Transverse colon (tissue), 4 donors: ENCODE measurements at regions of chr12 and their contacts with region 1.

Region 1: DNA sequence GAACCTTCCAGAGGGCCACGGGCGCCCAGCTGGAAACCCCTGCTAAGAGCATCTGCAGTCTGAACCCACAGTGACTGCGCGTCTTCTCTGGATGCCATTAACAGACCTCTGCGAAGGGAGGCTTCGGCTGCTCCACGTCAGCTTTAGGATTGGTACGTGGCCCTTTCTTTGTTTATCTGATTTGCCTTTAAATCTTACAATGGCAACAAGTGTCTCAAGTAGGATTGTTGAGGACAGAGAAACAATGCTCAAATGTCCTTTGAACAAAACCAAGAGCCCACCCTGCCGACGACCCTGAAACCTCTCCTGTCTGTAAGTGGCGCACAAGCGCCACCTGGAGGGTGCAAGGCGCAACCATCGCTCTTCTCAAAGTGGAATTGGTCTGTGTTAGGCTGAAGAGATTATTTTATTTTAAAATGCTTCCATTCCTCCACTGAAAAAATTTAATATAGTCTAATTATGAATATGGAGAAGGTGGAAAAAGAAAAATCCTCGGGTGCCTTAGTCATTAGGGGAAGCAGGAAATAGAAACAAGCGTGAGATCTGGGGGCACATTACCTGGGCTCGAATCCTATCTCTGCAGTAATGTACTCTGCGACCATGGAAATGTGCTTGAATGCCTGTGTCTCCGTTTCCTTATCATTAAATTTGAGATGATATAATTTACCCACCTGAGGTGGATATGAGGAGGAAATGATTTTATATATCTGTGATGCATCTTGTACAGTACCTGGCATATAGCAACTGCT is 82.6 kb upstream of the PTPRB start:
- DNase-seq: no peak
- H3K4me3 ChIP-seq: peak overlapping the region in 1 of 4 donors; percentile 25
- H3K27ac ChIP-seq: no peak overlapping the region
- H3K4me1 ChIP-seq: peaks cover 0 to 7% (median 0%) of the 10 kb centered on the region in 4 donors
- H3K27me3 ChIP-seq: no peaks in the 10 kb centered on the region
- CTCF ChIP-seq: peak; percentile 75 to 84 (median 77)
- EP300 ChIP-seq: no peak
- POLR2A ChIP-seq: no peak

Region 2: GRCh38 chr12:69879041-69879960 is 840.5 kb before region 1 on chr12:
- in situ Hi-C with region 1: loop called (anchors 5 to 25 kb)
- intact Hi-C with region 1: loop called (anchors 10 kb)
- DNase-seq: peak; percentile 75
- H3K4me3 ChIP-seq: peak overlapping the region in 2 of 4 donors; percentile 7 to 24
- H3K27ac ChIP-seq: no peak overlapping the region
- H3K4me1 ChIP-seq: peaks cover 0 to 7% (median 3%) of the 10 kb centered on the region in 4 donors
- H3K27me3 ChIP-seq: no peaks in the 10 kb centered on the region
- CTCF ChIP-seq: peak; percentile 83 to 91 (median 85)
- EP300 ChIP-seq: no peak
- POLR2A ChIP-seq: no peak

Region 3: DNA sequence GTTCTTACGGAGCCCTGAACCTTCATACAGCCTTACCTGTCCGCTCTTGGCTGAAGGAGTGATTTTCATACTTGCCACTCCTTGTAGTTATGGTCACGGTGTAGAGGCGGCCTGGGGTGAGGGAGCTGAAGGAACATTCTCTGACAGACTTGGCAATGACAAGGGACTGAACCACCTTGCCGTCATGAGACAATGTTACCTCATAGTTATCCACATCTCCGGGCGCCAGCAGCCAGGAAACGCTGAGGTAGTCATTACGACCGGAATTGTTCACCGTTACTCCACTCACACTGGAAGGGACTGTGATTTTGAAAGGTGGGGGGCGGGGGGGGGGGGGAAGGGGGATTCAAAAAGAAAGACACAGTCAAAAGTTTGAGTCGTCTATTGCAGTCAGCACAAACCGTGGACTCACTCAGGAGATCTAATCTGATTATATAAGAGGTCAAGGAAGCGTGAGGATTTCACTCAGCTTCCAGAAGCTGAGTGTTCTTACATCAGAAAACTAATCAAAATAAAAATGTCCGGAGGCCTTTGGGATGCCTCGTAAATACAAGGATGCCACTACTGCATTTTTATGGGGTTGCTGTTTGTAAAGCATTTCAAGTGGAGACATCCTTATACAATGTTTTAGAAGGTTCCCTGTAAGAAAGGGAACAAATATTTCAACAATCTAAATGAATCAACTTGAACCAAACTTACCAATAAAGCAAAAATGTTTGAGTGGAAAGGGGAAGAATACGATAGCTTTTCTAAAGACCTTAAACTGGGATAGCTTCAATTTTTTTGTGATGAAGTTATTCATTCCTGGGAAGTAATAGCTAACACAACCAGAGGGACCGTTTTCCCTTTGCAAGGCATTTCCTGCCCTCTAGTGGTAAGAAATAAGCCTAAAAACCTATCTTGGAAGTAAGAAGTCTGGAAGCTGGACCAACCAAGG is 143.2 kb before region 1 on chr12:
- in situ Hi-C with region 1: loop called in 1 of 4 experiments (anchors 10 kb)
- intact Hi-C with region 1: no loop called
- DNase-seq: no peak
- H3K4me3 ChIP-seq: no peak overlapping the region
- H3K27ac ChIP-seq: no peak overlapping the region
- H3K4me1 ChIP-seq: peaks cover 0 to 2% (median 0%) of the 10 kb centered on the region in 4 donors
- H3K27me3 ChIP-seq: no peaks in the 10 kb centered on the region
- CTCF ChIP-seq: peak; percentile 68 to 79 (median 76)
- EP300 ChIP-seq: no peak
- POLR2A ChIP-seq: no peak

Region 4: DNA sequence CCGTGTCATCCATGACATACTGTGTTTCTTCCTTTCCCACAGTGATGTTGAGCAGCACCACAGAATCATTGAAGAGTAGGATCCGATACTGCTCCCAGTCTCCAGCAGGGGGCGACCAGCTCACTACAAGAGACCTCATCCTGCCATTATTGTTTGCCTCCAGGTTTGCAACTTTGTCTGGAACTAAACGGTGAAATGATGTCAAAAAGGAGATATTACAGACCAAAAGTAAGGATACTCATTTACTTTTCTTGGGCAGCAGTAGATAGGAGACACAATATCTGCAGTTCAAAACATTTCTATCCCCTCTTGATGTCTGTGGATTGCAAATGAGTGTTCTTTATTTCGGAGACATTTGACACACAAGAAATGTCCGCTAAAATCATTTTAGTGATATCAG is 129.8 kb before region 1 on chr12:
- in situ Hi-C with region 1: loop called in 3 of 4 experiments (anchors 10 kb)
- intact Hi-C with region 1: no loop called
- DNase-seq: peak; percentile 69
- H3K4me3 ChIP-seq: no peak overlapping the region
- H3K27ac ChIP-seq: no peak overlapping the region
- H3K4me1 ChIP-seq: no peaks in the 10 kb centered on the region
- H3K27me3 ChIP-seq: no peaks in the 10 kb centered on the region
- CTCF ChIP-seq: peak; percentile 65 to 80 (median 74)
- EP300 ChIP-seq: no peak
- POLR2A ChIP-seq: no peak

Region 5: DNA sequence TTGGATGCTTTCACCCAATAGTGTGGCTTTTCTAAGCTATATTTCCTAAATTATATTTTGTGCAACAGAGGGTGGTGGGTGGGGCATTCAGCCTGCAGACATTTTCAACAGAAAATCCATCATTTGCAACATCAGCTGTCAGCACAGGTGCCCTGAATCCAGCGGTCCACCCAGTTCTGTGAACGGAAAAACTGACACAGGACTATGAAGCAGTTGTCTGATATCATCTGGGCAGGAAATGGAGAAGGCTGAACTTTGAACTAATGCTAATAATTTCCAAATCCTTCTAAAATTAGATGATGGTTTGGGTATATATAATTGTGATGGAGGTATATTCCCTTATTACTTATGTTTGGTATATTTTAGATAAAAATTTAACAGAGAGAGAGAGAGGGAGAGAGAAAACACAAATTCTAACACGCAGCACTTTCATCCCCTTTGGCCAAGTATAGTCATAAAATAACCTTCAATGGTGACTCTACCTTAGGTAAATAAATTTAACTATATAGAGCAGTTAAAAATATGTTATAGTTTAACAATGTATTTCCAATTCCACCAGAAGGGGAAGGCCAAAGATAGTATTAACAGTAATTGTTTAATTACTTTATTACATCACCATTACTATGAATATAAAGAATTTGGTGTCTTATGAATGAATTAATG is 24.4 kb before region 1 on chr12:
- in situ Hi-C with region 1: no loop called
- intact Hi-C with region 1: no loop called
- DNase-seq: no peak
- H3K4me3 ChIP-seq: no peak overlapping the region
- H3K27ac ChIP-seq: no peak overlapping the region
- H3K4me1 ChIP-seq: peaks cover 0 to 8% (median 0%) of the 10 kb centered on the region in 4 donors
- H3K27me3 ChIP-seq: no peaks in the 10 kb centered on the region
- CTCF ChIP-seq: no peak
- EP300 ChIP-seq: no peak
- POLR2A ChIP-seq: no peak

Region 6: DNA sequence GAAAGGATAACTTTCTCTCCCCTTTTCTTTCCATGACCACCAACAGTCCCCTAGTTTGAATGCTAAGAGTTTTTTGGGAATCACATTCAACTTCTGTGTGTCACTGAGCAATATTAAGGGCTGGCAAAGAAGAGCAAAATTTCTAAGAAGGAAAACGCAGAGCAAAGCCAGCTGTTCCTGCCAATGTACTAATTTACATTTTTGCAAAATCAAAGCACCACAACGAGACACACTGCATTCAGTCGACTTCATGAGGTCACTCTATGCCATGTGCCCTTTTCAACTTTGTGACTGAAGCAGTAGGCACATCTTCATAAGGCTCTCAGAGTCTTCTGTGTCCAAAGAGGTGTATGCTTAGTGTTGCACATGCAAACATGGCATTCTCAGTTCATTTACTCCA is 134.3 kb after region 1 on chr12:
- in situ Hi-C with region 1: no loop called
- intact Hi-C with region 1: no loop called
- DNase-seq: no peak
- H3K4me3 ChIP-seq: no peak overlapping the region
- H3K27ac ChIP-seq: peak overlapping the region in 3 of 4 donors; percentile 7 to 17 (median 17)
- H3K4me1 ChIP-seq: no peaks in the 10 kb centered on the region
- H3K27me3 ChIP-seq: no peaks in the 10 kb centered on the region
- CTCF ChIP-seq: no peak
- EP300 ChIP-seq: no peak
- POLR2A ChIP-seq: no peak

Region 7: GRCh38 chr12:71371122-71371521 is 651.3 kb after region 1 on chr12:
- in situ Hi-C with region 1: no loop called
- intact Hi-C with region 1: no loop called
- DNase-seq: no peak
- H3K4me3 ChIP-seq: no peak overlapping the region
- H3K27ac ChIP-seq: no peak overlapping the region
- H3K4me1 ChIP-seq: no peaks in the 10 kb centered on the region
- H3K27me3 ChIP-seq: no peaks in the 10 kb centered on the region
- CTCF ChIP-seq: peak in 1 of 5 experiments; percentile 17
- EP300 ChIP-seq: no peak
- POLR2A ChIP-seq: no peak